ENCODE measurements at regions of chr12 and their contacts with region 1.

Region 1: GRCh38 chr12:64801381-64801780 is 23.1 kb upstream of the TBC1D30 start:
- DNase-seq: no peak
- ATAC-seq: peak; percentile 46
- H3K4me3 ChIP-seq: no peak overlapping the region
- H3K27ac ChIP-seq: peak overlapping the region; percentile 69
- H3K4me1 ChIP-seq: peaks cover 19% of the 10 kb centered on the region
- H3K27me3 ChIP-seq: no peaks in the 10 kb centered on the region
- CTCF ChIP-seq: peak; percentile 9 to 47 (median 28); a peak in 5 of 6 replicates
- EP300 ChIP-seq: no peak
- POLR2A ChIP-seq: no peak
- RAD21 ChIP-seq: no peak

Region 2: GRCh38 chr12:64293654-64294364 is 507.6 kb before region 1 on chr12:
- CTCF ChIA-PET with region 1: no interaction called
- POLR2A ChIA-PET with region 1: no interaction called
- RAD21 ChIA-PET with region 1: no interaction called
- SMC1A ChIA-PET with region 1: no interaction called
- in situ Hi-C with region 1: no loop called
- intact Hi-C with region 1: no loop called
- DNase-seq: no peak
- ATAC-seq: peak; percentile 65
- H3K4me3 ChIP-seq: no peak overlapping the region
- H3K27ac ChIP-seq: no peak overlapping the region
- H3K4me1 ChIP-seq: peaks cover 13% of the 10 kb centered on the region
- H3K27me3 ChIP-seq: no peaks in the 10 kb centered on the region
- CTCF ChIP-seq: no peak
- EP300 ChIP-seq: no peak
- POLR2A ChIP-seq: no peak
- RAD21 ChIP-seq: no peak

Region 3: GRCh38 chr12:64790222-64790621 is 11.2 kb before region 1 on chr12:
- CTCF ChIA-PET with region 1: interaction called, 22 read pairs
- POLR2A ChIA-PET with region 1: interaction called, 6 read pairs
- RAD21 ChIA-PET with region 1: interaction called, 4 read pairs
- SMC1A ChIA-PET with region 1: interaction called, 11 read pairs
- in situ Hi-C with region 1: no loop called
- intact Hi-C with region 1: no loop called
- DNase-seq: no peak
- ATAC-seq: no peak
- H3K4me3 ChIP-seq: no peak overlapping the region
- H3K27ac ChIP-seq: no peak overlapping the region
- H3K4me1 ChIP-seq: no peaks in the 10 kb centered on the region
- H3K27me3 ChIP-seq: no peaks in the 10 kb centered on the region; a peak in 1 of 4 replicates
- CTCF ChIP-seq: no peak
- EP300 ChIP-seq: no peak
- POLR2A ChIP-seq: no peak
- RAD21 ChIP-seq: no peak

Region 4: GRCh38 chr12:64821183-64821582 is 19.8 kb after region 1 on chr12:
- CTCF ChIA-PET with region 1: interaction called, 32 read pairs
- POLR2A ChIA-PET with region 1: interaction called, 3 read pairs
- RAD21 ChIA-PET with region 1: interaction called, 7 read pairs
- SMC1A ChIA-PET with region 1: interaction called, 4 read pairs
- in situ Hi-C with region 1: no loop called
- intact Hi-C with region 1: no loop called
- DNase-seq: no peak
- ATAC-seq: no peak
- H3K4me3 ChIP-seq: no peak overlapping the region
- H3K27ac ChIP-seq: no peak overlapping the region
- H3K4me1 ChIP-seq: no peaks in the 10 kb centered on the region
- H3K27me3 ChIP-seq: peaks cover 0 to 2% of the 10 kb centered on the region in 2 experiments; a peak in 2 of 4 replicates
- CTCF ChIP-seq: no peak
- EP300 ChIP-seq: no peak
- POLR2A ChIP-seq: no peak
- RAD21 ChIP-seq: no peak

Region 5: DNA sequence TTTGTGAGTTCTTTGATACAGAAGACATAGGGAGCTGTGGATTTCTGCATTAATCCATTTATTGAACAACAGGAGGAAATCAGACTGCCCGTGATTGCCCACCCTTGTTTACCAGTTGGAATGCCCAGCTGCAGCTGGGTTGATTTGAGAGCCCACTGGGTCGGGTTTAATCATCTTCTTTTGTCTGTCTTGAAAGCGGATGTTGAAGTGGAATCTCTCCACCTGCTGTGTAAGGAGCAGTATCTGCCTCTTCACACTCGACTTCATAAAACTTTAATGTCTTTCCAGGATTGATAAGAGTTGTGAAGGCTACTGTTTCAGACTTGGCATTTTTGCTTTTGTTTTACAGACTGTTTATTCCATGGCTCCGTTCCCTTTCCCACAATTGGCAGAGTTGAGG is 62.9 kb after region 1 on chr12:
- CTCF ChIA-PET with region 1: interaction called, 9 read pairs
- POLR2A ChIA-PET with region 1: no interaction called
- RAD21 ChIA-PET with region 1: interaction called, 11 read pairs
- SMC1A ChIA-PET with region 1: interaction called, 4 read pairs
- in situ Hi-C with region 1: no loop called
- intact Hi-C with region 1: no loop called
- DNase-seq: no peak
- ATAC-seq: 0 out of 3 replicates have a peak, but pooled peaks have one; percentile 23
- H3K4me3 ChIP-seq: no peak overlapping the region
- H3K27ac ChIP-seq: no peak overlapping the region
- H3K4me1 ChIP-seq: peaks cover 23% of the 10 kb centered on the region
- H3K27me3 ChIP-seq: no peaks in the 10 kb centered on the region
- CTCF ChIP-seq: no peak
- EP300 ChIP-seq: no peak
- POLR2A ChIP-seq: no peak
- RAD21 ChIP-seq: no peak

Region 6: GRCh38 chr12:64883596-64884542 is 82.5 kb after region 1 on chr12:
- CTCF ChIA-PET with region 1: interaction called, 192 read pairs
- POLR2A ChIA-PET with region 1: interaction called, 7 read pairs
- RAD21 ChIA-PET with region 1: interaction called, 54 read pairs
- SMC1A ChIA-PET with region 1: interaction called, 130 read pairs
- in situ Hi-C with region 1: no loop called
- intact Hi-C with region 1: loop called (anchors 1 kb)
- DNase-seq: no peak
- ATAC-seq: peak; percentile 59
- H3K4me3 ChIP-seq: peak overlapping the region; percentile 28; the same call in 1 of the 2 replicates
- H3K27ac ChIP-seq: peak overlapping the region; percentile 98
- H3K4me1 ChIP-seq: peaks cover 41% of the 10 kb centered on the region
- H3K27me3 ChIP-seq: no peaks in the 10 kb centered on the region
- CTCF ChIP-seq: no peak
- EP300 ChIP-seq: no peak
- POLR2A ChIP-seq: no peak
- RAD21 ChIP-seq: no peak; the same call in 1 of the 2 replicates

Region 7: DNA sequence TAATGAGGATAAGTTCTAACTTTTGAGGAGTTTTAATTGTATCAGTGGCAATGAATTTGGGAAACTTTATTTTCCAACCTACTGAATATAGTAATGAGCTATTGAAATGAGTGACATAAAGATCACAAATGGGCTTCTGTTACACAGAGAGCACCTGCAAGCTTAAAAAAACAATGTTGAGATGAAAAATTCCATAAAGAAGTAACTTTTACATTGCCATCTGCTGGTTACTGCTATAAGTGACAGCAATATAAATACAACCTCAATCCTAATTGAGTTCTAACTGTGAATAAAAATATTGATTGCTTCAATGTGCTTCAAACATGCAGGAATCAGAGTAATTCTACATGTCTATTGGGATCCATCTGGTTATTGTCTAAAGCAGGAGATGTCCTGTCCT is 305.6 kb after region 1 on chr12:
- CTCF ChIA-PET with region 1: interaction called, 72 read pairs
- POLR2A ChIA-PET with region 1: no interaction called
- RAD21 ChIA-PET with region 1: interaction called, 25 read pairs
- SMC1A ChIA-PET with region 1: interaction called, 24 read pairs
- in situ Hi-C with region 1: no loop called
- intact Hi-C with region 1: loop called (anchors 5 kb)
- DNase-seq: no peak
- ATAC-seq: no peak
- H3K4me3 ChIP-seq: no peak overlapping the region
- H3K27ac ChIP-seq: no peak overlapping the region
- H3K4me1 ChIP-seq: no peaks in the 10 kb centered on the region
- H3K27me3 ChIP-seq: no peaks in the 10 kb centered on the region; a peak in 1 of 4 replicates
- CTCF ChIP-seq: peak; percentile 33 to 50 (median 39); a peak in 4 of 6 replicates
- EP300 ChIP-seq: no peak
- POLR2A ChIP-seq: no peak
- RAD21 ChIP-seq: peak; percentile 33

Measured in GM12878 (cell line).